Pancreas (tissue), 10 donors: ENCODE measurements at regions of chr6 and their contacts with region 1.

Region 1: DNA sequence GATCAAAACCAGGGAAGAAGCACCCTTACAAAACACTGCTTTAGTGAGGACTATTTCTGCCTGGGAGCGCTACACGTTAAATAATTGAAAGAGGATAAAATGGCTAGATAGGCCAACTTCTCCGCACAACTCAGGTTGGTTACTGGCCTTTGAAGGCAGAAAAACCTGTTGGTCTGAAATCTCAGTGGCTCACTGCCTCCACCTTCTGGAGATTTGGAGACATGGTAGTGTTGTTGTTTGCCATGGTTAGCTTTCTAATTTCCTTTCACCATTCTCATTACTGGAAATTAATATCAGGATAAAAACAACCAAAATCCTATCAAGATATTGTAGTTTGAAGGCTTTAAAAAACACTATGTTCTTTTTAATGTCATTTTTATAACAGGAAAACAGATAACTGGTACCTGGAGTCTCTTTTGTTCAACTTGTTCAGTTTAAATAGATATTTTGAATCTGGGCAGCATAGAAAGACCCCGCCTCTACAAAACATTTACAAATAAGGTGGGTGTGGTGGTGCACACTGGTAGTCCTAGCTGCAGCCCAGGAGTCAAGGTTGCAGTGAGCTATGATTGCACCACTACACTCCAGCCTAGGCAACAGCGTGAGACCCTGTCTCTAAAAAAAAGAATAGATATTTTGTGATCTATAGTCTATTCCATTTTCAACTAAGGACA is 27.5 kb upstream of the BCLAF1 start:
- DNase-seq: peak in 4 of 6 donors; percentile 34 to 71 (median 44)
- ATAC-seq: peak; percentile 85 to 100 (median 98)
- H3K4me3 ChIP-seq: no peak overlapping the region
- H3K27ac ChIP-seq: no peak overlapping the region
- H3K4me1 ChIP-seq: no peaks in the 10 kb centered on the region
- H3K27me3 ChIP-seq: no peaks in the 10 kb centered on the region
- CTCF ChIP-seq: peak; percentile 51 to 72 (median 70)

Region 2: GRCh38 chr6:136410201-136411027 is 93.3 kb after region 1 on chr6:
- intact Hi-C with region 1: no loop called
- DNase-seq: no peak
- ATAC-seq: no peak
- H3K4me3 ChIP-seq: no peak overlapping the region
- H3K27ac ChIP-seq: no peak overlapping the region
- H3K4me1 ChIP-seq: peaks cover 0 to 7% (median under 1%) of the 10 kb centered on the region in 3 donors
- H3K27me3 ChIP-seq: no peaks in the 10 kb centered on the region
- CTCF ChIP-seq: no peak

Region 3: GRCh38 chr6:136508701-136509392 is 191.7 kb after region 1 on chr6:
- intact Hi-C with region 1: loop called in 1 of 3 experiments (anchors 5 kb)
- DNase-seq: no peak
- ATAC-seq: no peak
- H3K4me3 ChIP-seq: no peak overlapping the region
- H3K27ac ChIP-seq: no peak overlapping the region
- H3K4me1 ChIP-seq: peaks cover 4 to 13% (median 10%) of the 10 kb centered on the region in 3 donors
- H3K27me3 ChIP-seq: no peaks in the 10 kb centered on the region
- CTCF ChIP-seq: no peak